Mucosa of descending colon (tissue), 3 donors: ENCODE measurements at regions of chr6 and their contacts with region 1.

Region 1: DNA sequence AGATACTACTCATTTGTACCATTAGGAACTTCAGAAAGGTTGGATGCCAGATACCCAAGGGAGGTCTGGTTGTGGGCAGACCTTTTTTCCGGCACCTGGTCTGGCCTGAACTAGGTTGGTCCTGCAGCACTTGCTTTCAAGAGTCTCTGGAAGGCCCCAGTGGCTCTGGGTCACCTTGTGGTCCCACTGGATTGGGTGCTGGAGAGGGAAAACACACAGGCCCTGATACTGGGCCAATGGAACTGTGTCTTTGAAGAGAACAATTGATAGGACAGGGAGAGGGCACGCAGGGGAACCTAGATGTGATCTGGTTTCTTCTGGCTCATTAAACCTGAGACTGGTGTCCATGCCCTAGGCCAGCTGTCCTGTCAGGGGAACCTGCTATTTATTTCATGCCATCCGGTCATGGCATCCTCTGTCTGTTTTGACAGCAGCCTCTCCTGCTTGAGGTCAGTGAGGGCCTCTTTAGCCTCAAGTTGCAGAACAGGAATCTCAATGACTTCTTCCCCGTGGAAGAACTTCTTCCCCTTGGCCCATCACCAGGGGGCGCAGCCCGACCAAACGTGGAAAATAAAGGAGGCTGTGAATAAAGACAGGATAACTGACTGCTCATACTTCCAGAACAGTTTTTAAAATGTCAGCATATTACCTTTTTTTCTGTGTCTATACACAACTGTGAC is 25.0 kb downstream of the TAF8 start:
- DNase-seq: peak; percentile 69 to 91 (median 91)
- ATAC-seq: peak; percentile 87
- H3K4me3 ChIP-seq: no peak overlapping the region
- H3K4me1 ChIP-seq: no peaks in the 10 kb centered on the region
- CTCF ChIP-seq: peak; percentile 54

Region 2: GRCh38 chr6:42166444-42167141 is 91.3 kb after region 1 on chr6:
- intact Hi-C with region 1: loop called (anchors 1 to 5 kb)
- DNase-seq: peak; percentile 63 to 86 (median 72)
- ATAC-seq: peak; percentile 94
- H3K4me3 ChIP-seq: no peak overlapping the region
- H3K4me1 ChIP-seq: no peaks in the 10 kb centered on the region
- CTCF ChIP-seq: peak; percentile 96

Region 3: DNA sequence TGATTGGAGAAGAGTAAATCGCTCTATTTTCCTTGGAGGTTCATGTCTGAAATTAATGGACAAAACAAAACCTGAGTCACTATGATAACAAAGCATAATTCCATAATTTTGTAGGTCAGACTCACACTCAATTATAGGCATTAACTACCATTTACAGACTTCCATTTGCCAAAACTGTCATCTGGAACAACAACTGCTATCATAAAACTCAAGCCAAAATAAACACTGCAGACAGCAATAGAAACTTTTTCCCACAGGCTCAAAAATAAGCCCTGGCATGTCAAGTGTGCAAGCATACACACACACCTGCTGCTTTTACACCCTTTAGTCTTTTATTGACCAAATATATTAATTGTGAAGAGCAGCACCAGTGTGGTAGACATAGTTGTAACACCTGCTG is 135.3 kb after region 1 on chr6:
- intact Hi-C with region 1: loop called in 1 of 2 experiments (anchors 5 kb)
- DNase-seq: no peak
- ATAC-seq: no peak
- H3K4me3 ChIP-seq: no peak overlapping the region
- H3K4me1 ChIP-seq: peaks cover 3% of the 10 kb centered on the region
- CTCF ChIP-seq: no peak